ENCODE measurements at regions of chr11 and their contacts with region 1.

Region 1: GRCh38 chr11:75873417-75874221 is 58.6 kb downstream of the UVRAG start:
- DNase-seq: no peak
- ATAC-seq: peak; percentile 79
- H3K4me3 Mint-ChIP-seq: peak overlapping the region; percentile 79
- H3K27ac Mint-ChIP-seq: peak overlapping the region; percentile 93
- H3K4me1 Mint-ChIP-seq: peaks cover 69% of the 10 kb centered on the region
- H3K27me3 Mint-ChIP-seq: no peaks in the 10 kb centered on the region
- CTCF ChIP-seq: no peak

Region 2: DNA sequence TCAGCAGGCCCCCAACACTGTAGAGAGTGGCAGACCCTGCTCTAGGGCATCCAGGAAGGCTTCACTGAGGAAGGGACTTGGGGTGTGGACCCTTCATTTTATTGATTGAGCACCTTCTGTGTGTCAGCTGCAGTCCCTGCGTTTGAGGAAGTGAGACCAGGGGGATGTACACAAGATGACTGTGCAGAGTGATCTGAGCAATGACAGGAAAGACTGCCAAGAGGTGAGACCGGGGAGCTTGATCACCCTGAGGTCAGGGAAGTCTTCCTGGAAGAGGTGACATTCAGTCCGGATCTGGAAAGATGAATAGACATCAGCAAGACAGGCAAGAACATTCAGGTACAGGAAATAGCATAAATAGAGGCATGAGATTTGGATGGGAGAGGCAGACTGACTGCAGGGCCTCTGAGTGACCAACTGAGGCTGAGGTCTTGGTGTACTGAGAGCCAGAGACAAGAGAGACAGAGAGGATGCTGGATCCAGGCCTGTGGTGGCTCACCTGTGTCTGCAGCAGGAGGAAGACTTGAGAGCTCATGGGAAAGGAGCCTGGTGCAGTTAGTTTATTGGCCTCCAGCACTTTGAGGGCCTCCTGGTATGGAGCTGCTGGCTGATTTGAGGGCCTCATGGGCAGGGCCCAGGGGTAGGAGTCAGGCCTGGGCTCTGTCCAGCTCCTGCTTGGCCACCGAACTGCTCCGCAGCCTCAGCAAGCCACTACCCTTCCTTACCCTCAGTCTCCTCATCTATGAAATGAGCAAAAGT is 99.8 kb before region 1 on chr11:
- CTCF ChIA-PET with region 1: no interaction called
- POLR2A ChIA-PET with region 1: interaction called, 5 read pairs
- intact Hi-C with region 1: loop called (anchors 1 kb)
- DNase-seq: peak; percentile 42
- ATAC-seq: peak; percentile 80
- H3K4me3 Mint-ChIP-seq: peak overlapping the region; percentile 1
- H3K27ac Mint-ChIP-seq: peak overlapping the region; percentile 76
- H3K4me1 Mint-ChIP-seq: peaks cover 80% of the 10 kb centered on the region
- H3K27me3 Mint-ChIP-seq: no peaks in the 10 kb centered on the region
- CTCF ChIP-seq: no peak

Region 3: GRCh38 chr11:75862437-75862836 is 11.2 kb before region 1 on chr11:
- CTCF ChIA-PET with region 1: no interaction called
- POLR2A ChIA-PET with region 1: no interaction called
- intact Hi-C with region 1: no loop called
- DNase-seq: no peak
- ATAC-seq: no peak
- H3K4me3 Mint-ChIP-seq: no peak overlapping the region
- H3K27ac Mint-ChIP-seq: no peak overlapping the region
- H3K4me1 Mint-ChIP-seq: peaks cover 41% of the 10 kb centered on the region
- H3K27me3 Mint-ChIP-seq: no peaks in the 10 kb centered on the region
- CTCF ChIP-seq: no peak

Region 4: GRCh38 chr11:75888416-75888815 is 14.8 kb after region 1 on chr11:
- CTCF ChIA-PET with region 1: interaction called, 19 read pairs
- POLR2A ChIA-PET with region 1: interaction called, 16 read pairs
- intact Hi-C with region 1: loop called (anchors 1 kb)
- DNase-seq: no peak
- ATAC-seq: no peak
- H3K4me3 Mint-ChIP-seq: no peak overlapping the region
- H3K27ac Mint-ChIP-seq: peak overlapping the region; percentile 88
- H3K4me1 Mint-ChIP-seq: peaks cover 84% of the 10 kb centered on the region
- H3K27me3 Mint-ChIP-seq: no peaks in the 10 kb centered on the region
- CTCF ChIP-seq: no peak